Esophagus squamous epithelium (tissue), 5 donors: ENCODE measurements at regions of chr4 and their contacts with region 1.

Region 1: DNA sequence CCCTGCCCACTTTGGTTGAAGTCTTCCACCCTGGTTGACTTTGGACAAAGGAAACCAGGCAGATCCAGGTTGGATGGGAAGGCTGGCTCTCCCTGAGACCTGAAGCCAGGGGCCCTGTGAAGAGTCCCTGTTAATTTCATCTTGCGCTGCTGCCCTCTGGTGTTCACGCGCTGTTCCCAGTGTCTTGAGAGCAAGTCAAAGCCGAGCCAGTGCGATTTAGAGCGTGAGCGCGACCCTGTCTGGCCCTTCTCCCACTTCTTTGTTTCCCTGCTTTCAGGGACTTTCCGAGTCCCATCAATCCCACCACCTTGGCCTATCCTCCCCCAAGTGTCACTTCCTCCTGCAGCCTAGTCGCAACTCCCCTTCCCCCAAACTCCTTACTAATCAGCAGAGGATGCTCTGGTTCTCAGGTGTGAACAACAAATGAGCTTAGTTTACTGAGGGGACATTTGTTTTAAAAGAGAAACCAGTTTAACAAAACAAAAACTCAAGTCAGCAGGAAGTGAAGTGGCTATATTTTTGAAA is 25.8 kb upstream of the CHRNA9 start:
- DNase-seq: no peak
- H3K4me3 ChIP-seq: peak overlapping the region in 1 of 4 donors; percentile 39
- H3K27ac ChIP-seq: peak overlapping the region in 3 of 4 donors; percentile 11 to 33 (median 18)
- H3K4me1 ChIP-seq: peaks cover 4 to 44% (median 8%) of the 10 kb centered on the region in 3 donors
- H3K27me3 ChIP-seq: no peaks in the 10 kb centered on the region
- CTCF ChIP-seq: peak; percentile 71 to 93 (median 88)
- POLR2A ChIP-seq: no peak

Region 2: DNA sequence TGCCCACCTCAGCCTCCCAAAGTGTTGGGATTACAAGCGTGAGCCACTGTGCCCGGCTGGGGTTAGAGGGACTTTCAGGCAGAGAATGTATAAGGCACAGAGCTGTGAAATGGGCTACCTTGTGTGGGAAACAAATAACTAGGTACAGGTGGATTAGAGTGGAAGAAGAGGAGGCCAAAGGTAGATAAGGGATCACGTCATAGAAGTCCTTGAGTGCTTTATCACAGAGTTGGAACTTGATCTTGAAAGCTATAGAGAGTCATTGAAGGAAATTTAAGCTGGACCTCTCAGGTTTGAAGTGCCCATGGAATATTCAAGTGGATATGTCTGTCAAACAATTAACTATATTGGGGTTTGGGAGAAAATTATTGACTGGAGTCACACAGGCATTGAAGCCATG is 244.3 kb before region 1 on chr4:
- intact Hi-C with region 1: loop called (anchors 10 kb)
- DNase-seq: no peak
- H3K4me3 ChIP-seq: no peak overlapping the region
- H3K27ac ChIP-seq: no peak overlapping the region
- H3K4me1 ChIP-seq: peaks cover 0 to 4% (median 0%) of the 10 kb centered on the region in 3 donors
- H3K27me3 ChIP-seq: no peaks in the 10 kb centered on the region
- CTCF ChIP-seq: no peak
- POLR2A ChIP-seq: no peak

Region 3: DNA sequence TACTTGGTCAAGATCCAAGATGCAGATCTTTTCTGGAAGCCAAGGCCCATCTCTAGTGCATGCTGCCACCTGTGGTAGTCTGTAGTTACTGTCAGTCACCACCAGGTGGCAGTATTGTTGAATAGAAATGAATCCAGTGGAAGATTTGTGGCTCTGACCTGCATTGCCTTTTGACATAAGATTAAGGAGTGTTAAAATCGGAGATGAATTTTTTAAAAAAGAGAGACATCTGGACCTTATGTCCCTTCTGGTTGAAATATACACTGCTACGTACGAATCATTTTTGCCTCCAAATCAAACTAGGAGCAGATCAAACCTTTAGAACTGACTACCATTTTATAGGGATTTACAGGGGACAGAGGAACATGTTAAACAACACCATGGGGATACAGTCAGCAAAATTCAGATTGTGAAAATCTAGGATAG is 159.3 kb before region 1 on chr4:
- intact Hi-C with region 1: loop called (anchors 5 kb)
- DNase-seq: peak; percentile 11
- H3K4me3 ChIP-seq: no peak overlapping the region
- H3K27ac ChIP-seq: no peak overlapping the region
- H3K4me1 ChIP-seq: no peaks in the 10 kb centered on the region
- H3K27me3 ChIP-seq: no peaks in the 10 kb centered on the region
- CTCF ChIP-seq: peak; percentile 52 to 96 (median 90)
- POLR2A ChIP-seq: no peak

Region 4: GRCh38 chr4:40502934-40503333 is 193.6 kb after region 1 on chr4:
- intact Hi-C with region 1: no loop called
- DNase-seq: no peak
- H3K4me3 ChIP-seq: no peak overlapping the region
- H3K27ac ChIP-seq: no peak overlapping the region
- H3K4me1 ChIP-seq: peaks cover 0 to 28% (median 7%) of the 10 kb centered on the region in 3 donors
- H3K27me3 ChIP-seq: no peaks in the 10 kb centered on the region
- CTCF ChIP-seq: no peak
- POLR2A ChIP-seq: no peak